ENCODE measurements at regions of chr20 and their contacts with region 1.

Region 1: GRCh38 chr20:13800728-13801134 is 15.9 kb downstream of the NDUFAF5 start:
- DNase-seq: peak; percentile 98
- H3K4me3 Mint-ChIP-seq: peak overlapping the region; percentile 39
- H3K27ac Mint-ChIP-seq: peak overlapping the region; percentile 7
- H3K4me1 Mint-ChIP-seq: peaks cover 21% of the 10 kb centered on the region
- H3K27me3 Mint-ChIP-seq: no peaks in the 10 kb centered on the region
- CTCF ChIP-seq: no peak

Region 2: GRCh38 chr20:13648291-13649228 is 152.2 kb before region 1 on chr20:
- CTCF ChIA-PET with region 1: no interaction called
- POLR2A ChIA-PET with region 1: no interaction called
- intact Hi-C with region 1: no loop called
- DNase-seq: no peak
- H3K4me3 Mint-ChIP-seq: no peak overlapping the region
- H3K27ac Mint-ChIP-seq: no peak overlapping the region
- H3K4me1 Mint-ChIP-seq: no peaks in the 10 kb centered on the region
- H3K27me3 Mint-ChIP-seq: no peaks in the 10 kb centered on the region
- CTCF ChIP-seq: no peak

Region 3: GRCh38 chr20:13777171-13777601 is 23.5 kb before region 1 on chr20:
- CTCF ChIA-PET with region 1: no interaction called
- POLR2A ChIA-PET with region 1: interaction called, 15 read pairs
- intact Hi-C with region 1: no loop called
- DNase-seq: peak; percentile 42
- H3K4me3 Mint-ChIP-seq: peak overlapping the region; percentile 43
- H3K27ac Mint-ChIP-seq: peak overlapping the region; percentile 63
- H3K4me1 Mint-ChIP-seq: peaks cover 38% of the 10 kb centered on the region
- H3K27me3 Mint-ChIP-seq: no peaks in the 10 kb centered on the region
- CTCF ChIP-seq: no peak